Common myeloid progenitor, CD34-positive (primary cell): ENCODE measurements at regions of chr19 and their contacts with region 1.

Region 1: DNA sequence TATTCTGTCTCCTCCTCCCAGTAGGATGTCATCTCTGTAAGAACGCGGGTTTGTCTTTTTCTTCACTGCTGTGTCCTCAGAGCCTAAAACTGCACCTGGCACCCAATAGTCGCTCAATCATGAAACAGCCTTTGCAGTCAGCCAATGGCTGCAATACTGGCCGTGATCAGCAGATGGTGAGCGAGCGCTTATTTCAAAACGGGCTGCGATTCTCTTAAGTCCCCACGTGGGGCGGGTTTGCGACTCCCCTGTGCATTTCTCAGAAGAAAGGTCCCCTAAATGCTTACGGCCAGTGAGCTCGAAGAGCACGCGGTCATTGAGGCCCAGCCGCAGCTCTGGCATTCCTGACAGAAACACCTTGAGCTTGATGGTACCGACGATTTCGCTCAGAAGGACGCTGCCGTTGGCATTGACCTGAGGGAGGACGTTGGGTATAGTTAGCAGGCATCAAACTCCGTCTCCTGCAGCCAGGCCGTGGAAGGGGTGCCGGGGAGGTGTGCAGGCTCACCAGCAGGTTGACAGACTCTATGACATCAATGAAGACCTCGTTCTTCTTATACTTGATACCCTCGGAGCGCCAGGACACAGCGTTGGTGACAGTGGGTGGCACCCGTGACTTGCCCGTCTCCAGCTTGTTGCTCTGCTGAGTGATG is 6.0 kb downstream of the AP1M2 start:
- DNase-seq: peak; percentile 93 to 97 (median 94)
- H3K4me3 ChIP-seq: no peak overlapping the region
- H3K27ac ChIP-seq: no peak overlapping the region
- H3K4me1 ChIP-seq: peaks cover 0 to 6% (median 2%) of the 10 kb centered on the region in 4 experiments
- H3K27me3 ChIP-seq: no peaks in the 10 kb centered on the region

Region 2: DNA sequence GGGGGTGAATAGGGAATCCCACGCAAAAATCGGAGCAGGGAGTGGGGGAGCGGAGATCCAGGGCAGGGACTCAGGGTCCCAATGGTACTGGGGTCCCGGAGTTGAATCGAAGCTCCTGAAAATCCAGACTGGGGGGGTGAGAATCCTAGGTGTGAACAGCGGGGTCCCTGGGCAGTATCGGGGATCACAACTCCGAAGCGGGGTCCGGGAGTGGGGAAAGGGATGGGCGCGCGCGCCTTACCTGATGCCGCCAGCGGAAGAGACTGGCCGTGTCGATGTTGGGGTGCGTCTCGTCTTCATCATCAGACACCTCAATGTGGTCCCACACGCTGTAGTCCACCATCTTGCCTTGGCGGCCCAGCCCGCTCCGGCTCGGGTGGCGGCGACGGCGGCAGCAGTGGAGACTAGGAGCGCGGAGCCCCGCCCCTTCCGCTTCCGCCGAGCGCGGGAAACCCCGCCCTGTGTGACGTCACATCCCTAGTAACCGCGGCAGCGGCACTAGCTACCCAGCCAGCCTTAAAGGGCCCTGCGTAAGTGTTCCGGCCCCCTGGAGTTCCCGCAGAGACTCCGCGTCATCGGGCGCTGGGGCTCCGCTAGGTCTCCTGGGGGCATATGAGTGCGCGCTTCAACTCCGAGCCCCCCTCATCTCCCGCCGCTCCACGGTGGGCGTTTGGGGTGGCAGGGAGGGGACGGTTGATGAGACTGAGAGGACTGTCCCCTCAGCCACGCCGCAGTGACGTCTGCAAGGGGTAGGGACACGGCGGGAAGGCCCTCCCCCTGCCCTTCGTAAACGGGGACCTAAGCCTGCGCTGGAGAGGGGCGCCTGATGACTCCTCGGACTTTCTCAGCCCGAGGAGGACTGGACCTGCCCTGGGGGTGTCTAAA is 177.7 kb before region 1 on chr19 and contains the start of gene CDC37:
- CTCF ChIA-PET with region 1: no interaction called
- POLR2A ChIA-PET with region 1: no interaction called
- DNase-seq: peak; percentile 95 to 98 (median 97)
- H3K4me3 ChIP-seq: peak within 1 kb of the TSS; percentile 72 to 100 (median 94)
- H3K27ac ChIP-seq: peak within 1 kb of the TSS; percentile 74 to 90
- H3K4me1 ChIP-seq: peaks cover 16 to 57% (median 47%) of the 10 kb centered on the region in 4 experiments
- H3K27me3 ChIP-seq: peaks cover 0 to 19% (median 0%) of the 10 kb centered on the region in 5 experiments

Region 3: DNA sequence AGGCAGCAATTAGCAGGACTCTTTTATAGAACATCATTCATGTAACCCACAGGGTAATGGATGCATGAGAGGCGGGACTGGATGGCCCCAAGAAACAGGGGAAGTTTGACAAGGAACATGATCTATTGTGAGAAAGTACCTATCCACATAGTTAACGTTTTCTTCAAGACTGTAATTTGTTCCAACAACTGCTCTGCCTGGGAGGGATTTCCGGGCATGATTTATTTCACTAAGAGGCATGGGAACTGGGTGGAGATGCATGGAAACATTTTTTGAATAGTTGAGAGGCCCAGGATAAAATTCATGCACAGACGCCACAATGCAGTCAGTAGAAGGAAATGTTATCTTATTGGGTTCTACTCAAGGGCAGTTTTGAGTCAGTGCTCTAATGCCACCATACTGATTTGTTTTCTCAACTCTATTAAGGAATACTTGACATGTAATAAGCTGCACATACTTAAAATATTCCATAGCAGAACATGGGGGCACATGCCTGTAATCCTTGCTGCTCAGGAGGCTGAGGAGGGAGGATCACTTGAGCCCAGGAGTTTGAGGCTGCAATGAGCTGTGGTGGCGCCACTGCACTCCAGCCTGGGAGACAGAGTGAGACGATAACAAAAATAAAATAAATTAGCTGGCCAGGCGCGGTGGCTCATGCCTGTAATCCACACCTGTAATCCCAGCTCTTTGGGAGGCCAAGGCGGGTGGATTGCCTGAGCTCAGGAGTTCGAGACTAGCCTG is 47.3 kb before region 1 on chr19:
- CTCF ChIA-PET with region 1: no interaction called
- POLR2A ChIA-PET with region 1: no interaction called
- DNase-seq: peak in 2 of 3 donors; percentile 38 to 55
- H3K4me3 ChIP-seq: no peak overlapping the region
- H3K27ac ChIP-seq: no peak overlapping the region
- H3K4me1 ChIP-seq: peaks cover 0 to 8% (median 0%) of the 10 kb centered on the region in 4 experiments
- H3K27me3 ChIP-seq: peaks cover 0 to 2% (median 0%) of the 10 kb centered on the region in 5 experiments

Region 4: DNA sequence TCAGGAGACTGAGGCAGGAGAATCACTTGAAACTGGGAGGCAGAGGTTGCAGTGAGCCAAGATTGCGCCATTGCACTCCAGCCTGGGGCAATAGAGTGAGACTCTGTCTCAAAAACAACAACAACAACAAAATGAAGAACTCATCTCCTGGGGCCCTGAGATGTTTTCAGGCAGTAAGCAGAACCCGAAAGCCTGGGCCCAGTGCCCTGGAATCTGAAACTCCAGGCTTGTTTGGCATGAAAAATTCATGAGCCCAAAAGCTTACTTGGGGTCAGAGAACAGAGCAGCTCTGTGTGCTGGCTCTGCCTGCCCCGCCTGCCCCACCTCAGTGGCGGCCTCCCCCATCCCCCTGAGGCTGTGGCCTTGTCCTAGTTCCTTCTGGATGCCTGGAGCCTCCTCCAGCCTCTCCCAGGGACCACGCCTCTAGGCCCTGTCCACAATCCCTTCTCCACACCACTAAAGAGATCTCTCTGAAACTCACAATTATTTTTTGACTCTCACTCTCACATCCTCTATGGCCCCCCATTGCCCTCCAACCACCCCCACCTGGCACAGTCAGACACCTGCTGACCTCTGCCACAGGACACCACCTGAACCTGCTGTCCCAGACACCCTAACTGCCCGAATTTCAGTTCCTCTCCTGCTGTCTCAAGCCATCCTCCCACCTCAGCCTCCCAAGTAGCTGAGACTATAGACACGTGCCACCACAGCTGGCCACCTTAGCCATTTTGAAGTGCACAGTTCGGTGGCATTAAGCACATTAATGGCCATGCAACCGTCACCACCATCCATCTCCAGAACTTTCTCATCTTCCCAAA is 12.9 kb after region 1 on chr19:
- CTCF ChIA-PET with region 1: interaction called, 20 read pairs
- POLR2A ChIA-PET with region 1: no interaction called
- DNase-seq: no peak
- H3K4me3 ChIP-seq: no peak overlapping the region
- H3K27ac ChIP-seq: no peak overlapping the region
- H3K4me1 ChIP-seq: peaks cover 9 to 39% (median 25%) of the 10 kb centered on the region in 4 experiments
- H3K27me3 ChIP-seq: no peaks in the 10 kb centered on the region

Region 5: GRCh38 chr19:10612491-10613119 is 31.5 kb after region 1 on chr19:
- CTCF ChIA-PET with region 1: interaction called, 25 read pairs
- POLR2A ChIA-PET with region 1: no interaction called
- DNase-seq: no peak
- H3K4me3 ChIP-seq: no peak overlapping the region
- H3K27ac ChIP-seq: no peak overlapping the region
- H3K4me1 ChIP-seq: peaks cover 0 to 4% (median 2%) of the 10 kb centered on the region in 4 experiments
- H3K27me3 ChIP-seq: no peaks in the 10 kb centered on the region

Region 6: GRCh38 chr19:10653715-10654492 is 72.8 kb after region 1 on chr19 and contains the start of gene ILF3:
- CTCF ChIA-PET with region 1: interaction called, 313 read pairs
- POLR2A ChIA-PET with region 1: interaction called, 5 read pairs
- DNase-seq: peak; percentile 100
- H3K4me3 ChIP-seq: peak within 1 kb of the TSS; percentile 84 to 98 (median 95)
- H3K27ac ChIP-seq: peak within 1 kb of the TSS; percentile 98 to 99
- H3K4me1 ChIP-seq: peaks cover 0 to 38% (median 32%) of the 10 kb centered on the region in 4 experiments
- H3K27me3 ChIP-seq: no peaks in the 10 kb centered on the region